Ovary (tissue), 10 donors: ENCODE measurements at regions of chr22 and their contacts with region 1.

Region 1: DNA sequence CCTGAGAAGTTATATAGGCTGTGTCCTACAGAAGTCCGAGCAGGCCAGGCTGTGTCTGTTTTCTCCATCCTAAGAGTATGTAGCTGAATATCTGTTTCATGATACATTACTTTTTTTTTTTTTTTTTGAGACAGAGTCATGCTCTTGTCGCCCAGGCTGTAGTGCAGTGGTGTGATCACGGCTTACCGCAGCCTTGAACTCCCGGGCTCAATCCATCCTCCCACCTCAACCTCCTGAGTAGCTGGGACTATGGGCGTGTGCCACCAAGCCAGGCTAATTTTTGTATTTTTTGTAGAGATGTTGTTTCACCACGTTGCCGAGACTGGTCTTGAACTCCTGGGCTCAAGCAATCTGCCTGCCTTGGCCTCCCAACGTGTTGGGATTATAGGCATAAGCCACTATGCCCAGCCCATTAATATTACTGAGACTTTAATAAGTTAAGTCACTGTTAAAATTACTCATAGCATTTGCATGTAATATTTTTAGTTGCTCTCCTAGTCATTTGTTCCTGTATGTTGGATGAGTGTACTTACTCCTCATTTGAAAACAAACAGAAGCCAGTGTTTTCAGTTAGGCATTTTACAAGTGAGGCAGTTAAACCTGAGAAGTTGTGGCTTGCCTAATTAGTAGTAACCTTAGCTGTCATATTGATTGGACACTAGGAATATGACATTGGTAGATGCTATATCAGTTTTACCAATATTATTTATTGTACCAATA is 26.1 kb downstream of the DRG1 start:
- DNase-seq: no peak
- H3K4me3 ChIP-seq: no peak overlapping the region
- H3K27ac ChIP-seq: no peak overlapping the region
- H3K4me1 ChIP-seq: no peaks in the 10 kb centered on the region
- H3K27me3 ChIP-seq: no peaks in the 10 kb centered on the region
- CTCF ChIP-seq: no peak
- EP300 ChIP-seq: no peak
- POLR2A ChIP-seq: no peak

Region 2: DNA sequence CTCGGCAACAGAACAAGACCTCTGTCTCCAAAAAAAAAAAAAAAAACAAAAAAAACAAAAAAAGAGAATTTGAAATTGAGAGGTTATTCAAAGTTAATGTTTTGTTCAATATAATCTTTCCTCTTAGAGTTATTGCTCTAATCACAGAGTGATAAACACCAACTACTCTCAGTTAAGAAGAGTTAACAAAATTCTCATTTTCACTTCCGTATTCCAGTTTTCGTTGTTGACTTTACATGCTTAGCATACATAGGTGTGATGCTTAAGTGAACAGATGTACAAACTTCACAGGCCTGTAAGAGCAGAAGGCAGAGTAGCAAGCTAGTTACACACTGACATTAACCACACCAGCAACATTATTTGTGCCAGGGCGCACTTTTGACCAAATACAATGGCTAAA is 51.8 kb after region 1 on chr22:
- intact Hi-C with region 1: loop called in 1 of 4 experiments (anchors 10 kb)
- DNase-seq: no peak
- H3K4me3 ChIP-seq: no peak overlapping the region
- H3K27ac ChIP-seq: no peak overlapping the region
- H3K4me1 ChIP-seq: no peaks in the 10 kb centered on the region
- H3K27me3 ChIP-seq: no peaks in the 10 kb centered on the region
- CTCF ChIP-seq: no peak
- EP300 ChIP-seq: no peak
- POLR2A ChIP-seq: no peak